ENCODE measurements at regions of chr16 and their contacts with region 1.

Region 1: DNA sequence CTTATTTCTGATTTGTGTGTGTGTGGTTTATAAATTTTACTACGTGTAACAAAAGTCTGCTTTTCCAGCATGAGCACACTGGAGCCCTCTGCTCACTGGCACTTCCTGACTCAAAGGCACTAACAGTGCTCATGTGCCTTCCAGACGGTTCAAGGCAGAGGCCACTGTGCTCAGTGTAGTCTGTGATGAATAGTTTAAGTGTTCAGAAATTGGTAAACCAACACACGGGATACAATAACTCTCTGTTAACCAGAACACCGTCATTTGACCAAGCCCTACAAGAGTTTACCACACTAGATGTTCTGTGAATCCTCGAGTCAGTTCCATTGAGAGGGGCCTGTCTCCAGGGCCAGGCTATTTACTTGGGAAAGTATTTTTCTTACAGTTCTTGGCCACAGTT is 191.9 kb downstream of the MRTFB start:
- DNase-seq: no peak
- ATAC-seq: no peak
- H3K4me3 ChIP-seq: no peak overlapping the region
- H3K27ac ChIP-seq: no peak overlapping the region
- H3K4me1 ChIP-seq: no peaks in the 10 kb centered on the region
- H3K27me3 ChIP-seq: no peaks in the 10 kb centered on the region
- CTCF ChIP-seq: no peak

Region 2: GRCh38 chr16:14609716-14610115 is 346.7 kb after region 1 on chr16:
- intact Hi-C with region 1: loop called in 1 of 10 experiments (anchors 10 kb)
- DNase-seq: no peak
- ATAC-seq: no peak
- H3K4me3 ChIP-seq: no peak overlapping the region
- H3K27ac ChIP-seq: no peak overlapping the region
- H3K4me1 ChIP-seq: no peaks in the 10 kb centered on the region
- H3K27me3 ChIP-seq: no peaks in the 10 kb centered on the region
- CTCF ChIP-seq: no peak

Measured in heart right ventricle (tissue), 16 donors.